Right ventricle myocardium inferior (tissue), 1 donor: ENCODE measurements at regions of chr12 and their contacts with region 1.

Region 1: DNA sequence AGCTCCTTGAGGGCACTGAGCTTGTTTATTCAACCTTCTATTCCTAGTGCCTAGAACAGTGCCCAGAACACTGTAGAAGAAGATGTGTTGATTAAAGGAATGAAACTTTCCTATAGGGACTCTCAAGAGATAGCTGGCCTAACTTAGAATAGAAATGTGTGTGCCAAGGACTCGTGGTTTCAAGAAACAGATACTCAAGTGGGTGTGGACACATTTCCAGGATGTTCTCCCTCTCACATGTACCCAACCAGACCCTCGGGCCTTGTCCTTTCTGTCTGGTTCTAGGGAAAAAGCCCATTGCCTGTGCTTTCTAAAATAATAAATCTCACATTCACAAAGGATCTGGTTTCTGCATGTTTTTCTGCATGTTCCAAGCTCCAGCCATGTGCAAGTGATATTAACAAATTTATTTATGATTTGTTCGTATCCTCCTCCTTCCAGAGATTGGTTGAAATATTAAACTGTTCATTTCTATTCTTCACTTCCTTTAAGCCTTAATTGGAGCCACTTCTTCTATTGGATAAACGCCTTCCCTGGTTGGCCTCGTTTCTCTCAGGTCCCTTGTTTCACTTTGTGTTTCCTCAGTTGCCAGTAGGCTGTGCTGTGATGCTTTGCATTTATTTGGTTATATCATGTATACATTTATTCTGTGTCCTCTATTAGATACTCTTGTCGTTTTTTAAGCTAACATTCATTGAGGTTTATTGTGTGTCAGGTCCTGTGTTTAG is 89.8 kb downstream of the CRADD start:
- DNase-seq: no peak
- ATAC-seq: peak; percentile 79

Region 2: GRCh38 chr12:93502802-93503623 is 263.9 kb before region 1 on chr12:
- intact Hi-C with region 1: loop called (anchors 10 kb)
- DNase-seq: no peak
- ATAC-seq: no peak

Region 3: DNA sequence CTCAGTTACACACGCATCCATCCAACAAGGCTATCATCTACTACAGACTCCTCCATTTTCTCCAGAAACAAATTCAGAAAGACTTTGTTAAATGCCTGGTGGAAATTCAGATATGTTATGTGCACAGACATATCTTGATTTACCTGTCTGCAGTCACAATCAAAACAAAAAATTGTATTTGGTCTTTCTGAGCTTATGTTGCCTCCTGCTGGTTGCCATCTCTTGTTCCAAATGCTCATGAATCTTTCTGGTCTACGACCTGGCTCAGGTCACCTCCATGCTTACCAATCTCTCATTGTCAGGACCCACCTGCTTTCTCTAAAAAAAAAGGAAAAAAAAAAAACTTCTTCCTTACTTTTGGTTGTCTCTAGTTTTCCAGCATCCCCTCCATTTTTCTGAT is 212.2 kb after region 1 on chr12:
- intact Hi-C with region 1: loop called (anchors 5 kb)
- DNase-seq: no peak
- ATAC-seq: no peak

Region 4: GRCh38 chr12:94074980-94075928 is 308.3 kb after region 1 on chr12:
- intact Hi-C with region 1: loop called (anchors 5 kb)
- DNase-seq: peak; percentile 81
- ATAC-seq: peak; percentile 92

Region 5: DNA sequence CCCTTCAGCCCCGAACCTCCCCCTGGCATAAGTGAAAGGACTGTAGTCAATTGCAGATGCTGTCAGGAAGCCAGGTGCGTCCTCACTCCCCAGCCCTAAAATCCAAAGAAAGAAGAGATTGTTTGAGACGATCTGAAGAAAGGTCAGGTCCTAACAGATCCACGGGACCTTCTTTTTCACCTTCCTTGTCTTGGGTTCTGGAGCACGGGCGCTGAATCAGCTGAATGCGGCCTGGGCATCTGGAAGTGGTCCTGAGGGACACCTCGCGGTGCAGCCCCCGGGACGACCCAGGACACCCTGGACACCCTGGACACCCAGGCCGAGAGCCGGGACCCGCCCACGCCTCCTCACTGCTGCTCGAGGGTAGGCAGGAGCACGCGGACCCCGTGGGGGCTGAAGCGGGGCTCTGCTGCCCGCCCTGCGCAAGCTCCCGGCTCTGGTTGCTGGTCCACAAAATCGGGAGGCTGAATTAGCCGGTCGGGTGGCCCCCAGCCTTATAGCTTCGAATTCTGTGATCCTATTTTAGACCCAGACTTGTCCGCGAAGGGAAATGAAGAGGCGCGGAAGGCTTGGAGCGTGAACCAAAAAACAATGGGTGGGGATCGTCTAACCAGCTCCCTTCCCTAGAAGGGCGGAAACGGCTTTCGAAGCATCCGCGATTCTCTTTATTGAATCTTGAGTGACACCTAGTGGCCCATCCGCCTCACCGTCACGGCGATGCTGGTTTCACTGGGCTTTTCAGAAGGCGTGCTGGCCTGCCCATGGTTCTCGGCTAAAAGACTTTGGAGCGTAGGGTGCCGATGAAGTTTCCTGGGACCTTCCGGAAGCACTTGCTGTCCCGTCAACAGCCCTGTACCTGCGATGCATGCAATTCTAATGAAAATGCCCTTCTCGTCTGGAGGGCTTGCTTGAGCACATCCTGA is 335.0 kb after region 1 on chr12:
- intact Hi-C with region 1: loop called (anchors 2 kb)
- DNase-seq: peak; percentile 94
- ATAC-seq: peak; percentile 91